GM23248 (cell line): ENCODE measurements at regions of chr12 and their contacts with region 1.

Region 1: DNA sequence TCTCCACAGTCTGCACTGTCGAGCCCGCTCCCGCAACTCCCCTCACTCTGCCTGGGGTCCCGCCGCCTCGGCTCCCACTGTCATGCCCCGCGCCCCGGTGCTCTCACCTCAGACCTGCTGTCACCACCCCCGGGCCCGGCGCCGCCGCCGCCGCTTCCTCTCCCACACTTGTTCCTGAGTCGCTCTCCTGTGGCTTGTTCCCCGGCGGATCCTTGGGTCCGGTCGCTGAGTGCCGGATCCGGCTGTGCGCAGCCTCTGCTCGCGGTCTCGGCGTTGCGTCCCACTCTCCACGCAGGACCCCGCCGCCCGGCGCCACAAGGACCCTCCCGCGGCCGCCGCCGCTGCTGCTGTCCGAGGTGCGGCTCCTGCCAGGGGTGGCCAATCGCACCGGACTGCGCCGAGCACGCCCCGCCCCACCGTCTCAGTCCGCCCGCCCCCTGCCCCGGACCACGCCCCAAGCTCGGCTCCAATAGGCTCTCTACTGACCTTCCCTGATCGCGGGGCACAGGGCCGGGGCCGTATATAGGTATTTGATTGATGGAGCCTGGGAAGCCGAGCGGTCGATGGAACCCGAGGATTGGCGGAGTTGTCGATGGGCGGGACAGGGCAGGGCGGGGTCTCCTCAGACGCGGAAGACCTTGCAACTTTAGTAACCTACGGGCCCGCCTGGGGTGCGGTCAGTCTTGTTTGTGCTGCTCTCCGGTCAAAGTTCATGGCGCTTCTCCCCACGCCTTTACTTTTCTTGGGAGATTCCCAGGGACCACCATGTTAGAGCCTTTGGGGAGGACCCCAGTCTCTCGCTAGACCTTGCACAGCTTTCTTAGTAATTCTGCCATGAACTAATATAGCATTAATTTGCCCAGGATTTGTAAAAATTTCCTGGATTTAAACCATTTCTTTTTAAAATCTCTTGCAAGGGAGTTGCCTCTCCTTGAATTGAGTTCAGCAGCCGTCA is at the start of gene TAOK3:
- DNase-seq: peak; percentile 99
- H3K4me3 ChIP-seq: peak within 1 kb of the TSS; percentile 98
- H3K27ac ChIP-seq: peak within 1 kb of the TSS; percentile 77
- H3K4me1 ChIP-seq: peaks cover 36% of the 10 kb centered on the region
- H3K27me3 ChIP-seq: no peaks in the 10 kb centered on the region
- total RNA-seq, gene TAOK3: 17.8 and 30.0 TPM in 2 replicates

Region 2: DNA sequence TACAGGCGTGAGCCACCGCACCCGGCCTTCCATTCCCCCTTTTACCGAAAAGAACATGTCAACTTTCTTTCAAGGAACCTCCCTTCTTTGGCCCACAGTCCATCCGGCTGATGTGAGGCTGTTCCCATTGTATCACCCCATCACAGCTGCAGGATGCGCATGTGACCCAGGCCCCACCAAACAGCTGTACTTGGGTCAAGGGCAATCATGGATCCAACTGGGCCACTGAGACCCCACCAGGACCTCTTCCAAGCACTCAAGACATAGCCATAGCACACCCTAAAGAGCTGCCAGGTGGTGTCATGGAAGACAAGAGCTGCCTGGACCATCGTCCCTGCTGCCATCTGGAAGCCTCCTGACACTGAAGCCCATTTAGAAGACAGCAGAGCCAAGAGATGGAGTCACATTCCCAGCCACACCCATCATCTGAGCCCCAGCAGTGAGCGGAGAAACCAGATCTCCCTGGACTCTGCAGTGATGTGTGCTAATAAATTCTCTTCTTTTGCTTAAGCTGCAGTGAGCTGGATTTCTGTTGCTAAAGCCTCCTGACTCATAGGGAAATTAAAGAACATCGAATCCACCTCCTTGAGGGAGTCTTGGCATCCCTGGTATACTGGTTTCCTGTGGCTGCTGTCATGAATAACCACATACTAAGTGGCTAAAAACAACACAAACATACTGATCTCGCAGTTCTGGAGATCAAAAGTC is 509.7 kb before region 1 on chr12:
- in situ Hi-C with region 1: loop called (anchors 10 kb)
- DNase-seq: peak; percentile 83
- H3K4me3 ChIP-seq: no peak overlapping the region
- H3K27ac ChIP-seq: no peak overlapping the region
- H3K4me1 ChIP-seq: no peaks in the 10 kb centered on the region
- H3K27me3 ChIP-seq: peaks cover 7% of the 10 kb centered on the region; the same call in 1 of the 2 replicates

Region 3: GRCh38 chr12:118175823-118176447 is 196.9 kb before region 1 on chr12:
- in situ Hi-C with region 1: loop called (anchors 10 kb)
- DNase-seq: no peak
- H3K4me3 ChIP-seq: no peak overlapping the region
- H3K27ac ChIP-seq: no peak overlapping the region
- H3K4me1 ChIP-seq: no peaks in the 10 kb centered on the region
- H3K27me3 ChIP-seq: no peaks in the 10 kb centered on the region

Region 4: GRCh38 chr12:119235197-119235750 is 862.5 kb after region 1 on chr12:
- in situ Hi-C with region 1: no loop called
- DNase-seq: no peak
- H3K4me3 ChIP-seq: no peak overlapping the region
- H3K27ac ChIP-seq: no peak overlapping the region
- H3K4me1 ChIP-seq: no peaks in the 10 kb centered on the region
- H3K27me3 ChIP-seq: no peaks in the 10 kb centered on the region